ENCODE measurements at regions of chr3 and their contacts with region 1.

Region 1: GRCh38 chr3:107690522-107691138 is 167.9 kb downstream of the BBX start:
- DNase-seq: no peak
- H3K4me3 Mint-ChIP-seq: no peak overlapping the region
- H3K27ac Mint-ChIP-seq: no peak overlapping the region
- H3K4me1 Mint-ChIP-seq: no peaks in the 10 kb centered on the region
- H3K27me3 Mint-ChIP-seq: no peaks in the 10 kb centered on the region

Region 2: GRCh38 chr3:107740992-107741896 is 50.6 kb after region 1 on chr3:
- intact Hi-C with region 1: loop called (anchors 2 kb)
- DNase-seq: no peak
- H3K4me3 Mint-ChIP-seq: no peak overlapping the region
- H3K27ac Mint-ChIP-seq: no peak overlapping the region
- H3K4me1 Mint-ChIP-seq: no peaks in the 10 kb centered on the region
- H3K27me3 Mint-ChIP-seq: no peaks in the 10 kb centered on the region

Measured in activated T-helper 1 cell treated with anti-CD3 and anti-CD28 coated beads, Interleukin-12 subunit alpha, Interleukin-12 subunit beta, Interleukin-2, Interleukin-4 antibody, amounts not matched to agents 30 ng/mL and 10 ng/mL and 1 ng/mL, durations not matched to agents 14 hours and 24 hours and 36 hours (primary cell).